Activated naive CD4-positive, alpha-beta T cell treated with anti-CD3 and anti-CD28 coated beads for 36 hours (primary cell): ENCODE measurements at regions of chr1 and their contacts with region 1.

Region 1: DNA sequence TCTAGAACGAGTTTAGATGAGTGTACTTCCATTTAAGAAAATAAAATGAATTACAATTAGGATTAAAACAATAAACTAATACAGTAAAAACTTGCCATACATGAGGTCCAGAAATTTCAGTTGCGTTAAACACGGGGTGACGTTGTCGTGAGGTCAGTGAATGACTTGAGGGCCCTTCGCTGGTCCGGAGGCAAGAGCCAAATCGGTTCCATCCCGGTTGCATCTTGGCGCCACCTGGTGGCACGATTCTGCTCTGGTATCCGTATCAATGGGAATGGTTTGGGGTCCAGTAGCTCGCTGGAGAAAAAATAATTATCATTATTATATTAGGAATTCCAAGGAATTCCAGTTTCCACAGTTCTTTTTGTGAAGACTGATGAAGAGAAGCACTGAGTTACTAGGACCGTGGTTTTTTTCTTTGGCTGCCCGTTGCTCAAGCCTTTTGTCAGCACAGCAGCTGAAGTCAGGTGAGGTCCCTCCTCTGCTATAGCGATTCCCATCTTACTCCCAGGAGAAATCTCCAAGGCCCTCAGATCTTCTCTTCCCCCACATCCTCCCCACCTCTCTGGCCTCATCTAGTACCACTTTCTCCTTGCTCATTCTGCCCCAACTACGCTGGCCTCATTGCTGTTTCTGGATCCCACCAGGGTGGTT is 161.4 kb downstream of the SLC35F3 start:
- DNase-seq: peak; percentile 83
- H3K4me3 Mint-ChIP-seq: no peak overlapping the region
- H3K27ac Mint-ChIP-seq: no peak overlapping the region
- H3K4me1 Mint-ChIP-seq: no peaks in the 10 kb centered on the region
- H3K27me3 Mint-ChIP-seq: peaks cover 5% of the 10 kb centered on the region

Region 2: DNA sequence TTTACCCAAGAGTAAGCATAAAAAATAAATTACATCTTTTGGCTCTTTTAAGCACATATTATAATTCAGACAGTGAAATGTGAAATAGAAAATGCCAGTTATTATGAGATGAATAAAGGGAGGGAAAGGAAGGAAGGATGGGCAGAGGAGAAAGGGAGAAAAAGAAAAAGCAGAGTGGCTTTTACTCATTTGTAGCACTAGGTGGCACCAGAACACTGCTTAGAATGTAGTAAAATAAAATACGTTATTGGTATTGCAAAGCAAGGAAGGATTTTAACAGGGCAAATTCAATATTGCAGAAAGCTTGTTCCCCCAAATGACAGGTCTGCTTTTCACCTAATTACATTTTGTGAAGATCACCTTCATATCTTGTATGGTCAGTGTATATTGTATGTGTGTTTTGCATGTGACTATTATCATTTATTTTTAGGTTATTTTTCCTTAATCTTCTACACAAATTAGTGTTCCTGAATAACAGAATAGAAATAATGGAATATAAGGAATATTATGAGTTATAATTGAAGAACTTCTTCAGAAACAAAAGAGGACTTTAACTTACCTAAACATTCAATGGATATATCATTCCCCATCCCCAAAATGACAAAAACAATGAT is 761.3 kb before region 1 on chr1:
- CTCF ChIA-PET with region 1: interaction called, 10 read pairs
- intact Hi-C with region 1: loop called (anchors 1 kb)
- DNase-seq: no peak
- H3K4me3 Mint-ChIP-seq: no peak overlapping the region
- H3K27ac Mint-ChIP-seq: no peak overlapping the region
- H3K4me1 Mint-ChIP-seq: no peaks in the 10 kb centered on the region
- H3K27me3 Mint-ChIP-seq: peaks cover 4% of the 10 kb centered on the region

Region 3: DNA sequence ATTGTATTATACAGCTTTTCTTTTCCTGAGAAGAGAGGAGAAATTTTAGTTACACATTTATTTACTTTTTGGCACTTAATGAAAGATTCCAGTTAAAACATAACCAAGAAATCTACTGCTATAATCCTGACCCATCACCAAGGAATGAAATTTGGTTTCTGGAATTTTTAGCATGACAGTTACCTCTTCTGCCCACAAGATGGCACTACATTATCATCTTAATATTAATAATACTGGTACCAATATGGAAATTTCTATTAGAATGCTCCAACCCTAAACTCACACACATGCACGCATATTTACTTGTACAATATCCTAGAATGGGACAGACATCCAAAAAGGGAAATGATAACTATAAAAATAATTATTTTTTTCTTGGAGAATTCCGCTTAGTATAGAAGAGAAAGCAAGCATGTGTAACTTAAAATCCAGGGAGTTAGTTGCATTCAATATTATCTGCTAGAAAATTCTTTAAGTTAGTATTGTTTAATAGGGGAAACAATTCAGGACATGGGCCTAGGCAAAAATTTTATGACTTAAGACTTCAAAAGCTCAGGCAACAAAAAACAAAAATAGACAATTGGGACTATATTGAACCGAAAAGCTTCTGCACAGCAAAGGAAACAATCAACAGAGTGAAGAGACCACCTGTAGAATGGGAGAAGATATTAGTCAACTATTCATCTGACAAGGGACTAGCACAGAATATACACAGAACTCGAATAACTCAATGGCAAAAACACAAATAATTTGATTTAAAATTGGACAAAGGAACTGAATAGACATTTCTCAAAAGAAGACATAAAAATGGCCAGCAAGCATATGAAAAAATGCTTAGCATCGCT is 701.0 kb before region 1 on chr1:
- CTCF ChIA-PET with region 1: interaction called, 3 read pairs
- intact Hi-C with region 1: loop called (anchors 1 kb)
- DNase-seq: no peak
- H3K4me3 Mint-ChIP-seq: no peak overlapping the region
- H3K27ac Mint-ChIP-seq: no peak overlapping the region
- H3K4me1 Mint-ChIP-seq: no peaks in the 10 kb centered on the region
- H3K27me3 Mint-ChIP-seq: peaks cover 5% of the 10 kb centered on the region

Region 4: DNA sequence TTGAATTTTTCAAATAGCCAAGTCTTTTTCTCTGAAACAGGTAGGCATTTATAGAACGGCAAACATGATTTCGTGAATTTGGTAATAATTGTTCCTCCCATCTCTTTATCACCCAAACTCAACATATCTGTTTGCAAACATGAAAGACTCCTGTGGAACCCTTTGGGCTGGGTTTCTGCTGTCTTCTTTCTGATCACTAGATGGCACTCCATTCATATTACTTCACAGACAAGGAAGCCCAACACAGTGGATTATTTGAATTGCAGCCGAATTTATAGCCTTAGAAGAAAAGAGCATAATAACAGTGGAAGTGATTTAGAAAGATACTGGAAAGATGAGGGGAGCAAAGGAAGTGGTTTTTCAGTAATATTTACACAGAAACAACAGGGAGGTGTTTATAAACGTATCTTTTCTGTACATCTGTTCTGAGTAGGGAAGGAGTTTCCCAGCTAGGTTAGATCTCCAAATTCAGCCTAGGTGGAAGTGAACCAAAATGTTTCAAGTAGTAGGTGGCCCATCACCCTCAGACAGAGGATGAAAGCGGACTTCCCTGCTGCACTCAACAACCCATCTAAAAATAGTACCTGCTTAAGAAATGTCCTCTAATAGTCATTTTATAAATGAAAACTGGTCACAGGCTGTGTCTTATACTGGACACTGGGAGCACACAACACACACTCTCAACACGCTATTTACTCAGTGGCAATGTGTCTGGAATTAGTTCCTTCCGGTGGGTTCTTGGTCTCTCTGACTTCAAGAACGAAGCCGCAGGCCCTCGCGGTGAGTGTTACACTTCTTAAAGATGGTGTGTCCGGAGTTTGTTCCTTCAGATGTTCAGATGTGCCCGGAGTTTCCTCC is 670.8 kb before region 1 on chr1:
- CTCF ChIA-PET with region 1: interaction called, 6 read pairs
- intact Hi-C with region 1: loop called (anchors 1 kb)
- DNase-seq: peak; percentile 35
- H3K4me3 Mint-ChIP-seq: no peak overlapping the region
- H3K27ac Mint-ChIP-seq: no peak overlapping the region
- H3K4me1 Mint-ChIP-seq: no peaks in the 10 kb centered on the region
- H3K27me3 Mint-ChIP-seq: peaks cover 36% of the 10 kb centered on the region

Region 5: GRCh38 chr1:233440951-233441401 is 624.9 kb before region 1 on chr1:
- CTCF ChIA-PET with region 1: interaction called, 18 read pairs
- intact Hi-C with region 1: loop called (anchors 1 kb)
- DNase-seq: peak; percentile 8
- H3K4me3 Mint-ChIP-seq: no peak overlapping the region
- H3K27ac Mint-ChIP-seq: no peak overlapping the region
- H3K4me1 Mint-ChIP-seq: no peaks in the 10 kb centered on the region
- H3K27me3 Mint-ChIP-seq: peaks cover 17% of the 10 kb centered on the region

Region 6: DNA sequence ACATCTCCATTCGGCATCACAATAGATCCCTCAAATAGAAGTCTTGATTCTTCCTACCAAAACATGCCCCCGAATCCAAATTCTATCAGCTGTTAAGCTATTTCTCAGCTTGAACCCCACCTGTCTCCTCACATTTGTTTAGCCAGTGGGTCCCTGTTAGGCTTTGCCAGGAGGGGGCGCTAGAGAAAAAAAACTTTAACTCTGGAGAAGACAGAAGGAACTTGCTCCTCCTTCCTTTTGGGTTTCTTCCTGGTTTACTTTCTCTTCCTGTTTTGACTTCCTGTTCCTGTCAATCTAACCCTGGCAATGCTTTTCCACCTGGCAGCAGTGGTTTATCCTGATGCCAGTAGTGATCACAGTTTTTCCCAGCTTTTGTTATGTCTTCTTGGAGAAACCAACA is 547.6 kb before region 1 on chr1:
- CTCF ChIA-PET with region 1: no interaction called
- intact Hi-C with region 1: loop called (anchors 10 kb)
- DNase-seq: peak; percentile 50
- H3K4me3 Mint-ChIP-seq: no peak overlapping the region
- H3K27ac Mint-ChIP-seq: no peak overlapping the region
- H3K4me1 Mint-ChIP-seq: peaks cover 3% of the 10 kb centered on the region
- H3K27me3 Mint-ChIP-seq: peaks cover 8% of the 10 kb centered on the region

Region 7: DNA sequence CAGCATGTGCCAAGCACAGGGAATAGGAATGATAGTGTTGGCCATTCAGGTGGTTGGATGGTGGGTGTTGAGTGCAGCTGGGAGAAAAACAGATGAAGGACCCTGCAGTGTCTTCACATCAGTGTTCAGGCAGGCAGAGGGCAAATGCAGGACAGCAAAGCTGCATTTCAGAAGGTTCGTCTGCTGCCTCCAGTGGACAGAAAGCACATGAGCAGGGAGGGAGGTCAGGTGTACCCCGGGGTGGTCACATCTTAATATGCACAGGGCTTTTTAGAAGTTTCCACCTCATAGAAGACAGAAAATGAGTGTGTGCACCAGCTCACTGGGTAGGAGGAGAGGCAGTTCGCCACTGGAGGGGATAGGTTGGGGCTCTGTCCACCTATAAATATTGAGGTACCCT is 23.5 kb after region 1 on chr1:
- CTCF ChIA-PET with region 1: no interaction called
- intact Hi-C with region 1: no loop called
- DNase-seq: no peak
- H3K4me3 Mint-ChIP-seq: no peak overlapping the region
- H3K27ac Mint-ChIP-seq: no peak overlapping the region
- H3K4me1 Mint-ChIP-seq: no peaks in the 10 kb centered on the region
- H3K27me3 Mint-ChIP-seq: peaks cover 13% of the 10 kb centered on the region